HCT116 (cell line): ENCODE measurements at regions of chr17 and their contacts with region 1.

Region 1: GRCh38 chr17:65231662-65232335 is 94.6 kb downstream of the RGS9 start:
- DNase-seq: peak; percentile 74
- ATAC-seq: peak; percentile 92
- H3K4me3 ChIP-seq: no peak overlapping the region
- H3K27ac ChIP-seq: no peak overlapping the region
- H3K4me1 ChIP-seq: peaks cover 24 to 32% of the 10 kb centered on the region in 2 experiments
- H3K27me3 ChIP-seq: no peaks in the 10 kb centered on the region
- CTCF ChIP-seq: peak; percentile 88 to 97 (median 95)
- POLR2A ChIP-seq: no peak
- RAD21 ChIP-seq: peak; percentile 98

Region 2: DNA sequence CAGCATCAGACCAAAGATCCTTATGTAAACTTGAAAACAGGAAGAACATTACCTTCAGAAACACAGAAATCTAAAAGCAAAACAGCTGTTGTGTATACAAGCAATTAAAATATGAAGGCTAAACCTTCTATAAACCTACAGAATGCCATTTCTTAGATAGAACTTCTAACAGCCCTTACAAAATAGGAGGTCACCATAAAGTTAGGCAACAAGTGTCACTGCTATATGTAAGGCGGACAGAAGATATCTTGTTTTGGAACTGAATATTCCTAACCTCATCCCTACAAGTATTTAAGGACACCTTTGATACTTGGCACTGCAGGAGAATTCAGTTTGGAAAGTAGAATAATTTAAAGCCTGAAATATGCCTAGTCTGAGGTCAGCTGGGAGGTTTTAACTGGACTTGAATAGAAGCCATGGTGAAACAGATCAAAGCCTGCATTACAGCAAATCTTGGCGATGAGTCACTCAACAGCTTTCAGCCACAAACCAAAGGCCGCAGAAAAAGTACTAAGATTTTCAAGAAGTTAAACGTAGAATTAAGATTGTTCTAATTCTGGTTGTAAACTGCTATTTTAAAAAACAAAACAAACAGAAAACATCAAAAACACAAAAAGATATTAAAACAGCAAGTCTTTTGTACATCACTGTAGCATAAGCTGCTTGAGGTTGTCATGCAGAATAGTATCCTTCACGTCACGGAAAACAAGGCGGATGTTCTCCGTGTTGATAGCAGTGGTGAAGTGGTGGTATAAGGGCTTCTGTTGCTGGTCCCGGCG is 218.0 kb before region 1 on chr17:
- CTCF ChIA-PET with region 1: no interaction called
- POLR2A ChIA-PET with region 1: no interaction called
- RAD21 ChIA-PET with region 1: no interaction called
- intact Hi-C with region 1: no loop called
- DNase-seq: peak; percentile 37
- ATAC-seq: peak; percentile 65
- H3K4me3 ChIP-seq: no peak overlapping the region
- H3K27ac ChIP-seq: no peak overlapping the region
- H3K4me1 ChIP-seq: peaks cover 11 to 15% of the 10 kb centered on the region in 2 experiments
- H3K27me3 ChIP-seq: no peaks in the 10 kb centered on the region
- CTCF ChIP-seq: no peak
- POLR2A ChIP-seq: no peak
- RAD21 ChIP-seq: no peak

Region 3: GRCh38 chr17:65219124-65219523 is 12.7 kb before region 1 on chr17:
- CTCF ChIA-PET with region 1: interaction called, 16 read pairs
- POLR2A ChIA-PET with region 1: interaction called, 3 read pairs
- RAD21 ChIA-PET with region 1: no interaction called
- intact Hi-C with region 1: no loop called
- DNase-seq: no peak
- ATAC-seq: peak; percentile 63
- H3K4me3 ChIP-seq: no peak overlapping the region
- H3K27ac ChIP-seq: no peak overlapping the region
- H3K4me1 ChIP-seq: peaks cover 13 to 16% of the 10 kb centered on the region in 2 experiments
- H3K27me3 ChIP-seq: peaks cover 14% of the 10 kb centered on the region; the same call in 1 of the 2 replicates
- CTCF ChIP-seq: peak; percentile 15 to 60 (median 51); a peak in 4 of 6 replicates
- POLR2A ChIP-seq: no peak
- RAD21 ChIP-seq: peak; percentile 55

Region 4: DNA sequence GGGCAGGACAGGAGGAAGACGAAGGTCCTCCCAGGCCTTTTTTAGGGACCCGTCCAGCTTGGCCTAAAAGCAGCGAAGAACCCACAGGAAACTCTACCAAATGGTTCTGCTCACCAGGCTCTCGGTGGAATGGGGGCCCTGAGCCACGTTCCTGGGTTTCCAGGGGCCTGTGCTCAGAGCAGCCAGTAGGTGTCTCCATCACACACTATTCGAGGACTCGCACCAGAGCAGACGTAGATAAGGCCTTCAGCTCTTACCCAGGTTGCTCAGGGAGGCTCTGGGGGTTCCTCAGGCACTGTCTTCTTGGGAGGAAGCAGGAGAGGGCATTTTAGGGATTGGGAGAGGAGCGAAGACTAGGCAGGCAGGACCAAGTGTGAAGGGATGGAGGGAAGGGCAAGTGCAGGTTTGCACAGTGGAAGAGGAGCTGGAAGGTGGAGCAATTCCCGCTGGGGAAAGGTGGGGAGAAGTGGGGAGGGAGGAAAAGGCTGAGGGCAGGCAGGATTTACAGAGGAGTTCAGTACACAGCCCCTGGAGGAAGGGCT is 62.5 kb after region 1 on chr17:
- CTCF ChIA-PET with region 1: interaction called, 10 read pairs
- POLR2A ChIA-PET with region 1: no interaction called
- RAD21 ChIA-PET with region 1: interaction called in 1 of 2 experiments, 3 read pairs
- intact Hi-C with region 1: no loop called
- DNase-seq: peak; percentile 72
- ATAC-seq: peak; percentile 100
- H3K4me3 ChIP-seq: no peak overlapping the region
- H3K27ac ChIP-seq: no peak overlapping the region
- H3K4me1 ChIP-seq: peaks cover 4 to 16% of the 10 kb centered on the region in 2 experiments; a peak in 3 of 4 replicates
- H3K27me3 ChIP-seq: no peaks in the 10 kb centered on the region
- CTCF ChIP-seq: peak; percentile 88 to 97 (median 96)
- POLR2A ChIP-seq: no peak
- RAD21 ChIP-seq: peak; percentile 98

Region 5: GRCh38 chr17:65370669-65371131 is 138.9 kb after region 1 on chr17:
- CTCF ChIA-PET with region 1: no interaction called
- POLR2A ChIA-PET with region 1: no interaction called
- RAD21 ChIA-PET with region 1: no interaction called
- intact Hi-C with region 1: no loop called
- DNase-seq: no peak
- ATAC-seq: no peak
- H3K4me3 ChIP-seq: no peak overlapping the region
- H3K27ac ChIP-seq: no peak overlapping the region
- H3K4me1 ChIP-seq: no peaks in the 10 kb centered on the region
- H3K27me3 ChIP-seq: no peaks in the 10 kb centered on the region
- CTCF ChIP-seq: no peak
- POLR2A ChIP-seq: no peak
- RAD21 ChIP-seq: no peak

Region 6: GRCh38 chr17:65794572-65794971 is 562.8 kb after region 1 on chr17:
- CTCF ChIA-PET with region 1: interaction called, 4 read pairs
- POLR2A ChIA-PET with region 1: no interaction called
- RAD21 ChIA-PET with region 1: no interaction called
- intact Hi-C with region 1: loop called (anchors 5 kb)
- DNase-seq: peak; percentile 48
- ATAC-seq: peak; percentile 84
- H3K4me3 ChIP-seq: no peak overlapping the region
- H3K27ac ChIP-seq: no peak overlapping the region
- H3K4me1 ChIP-seq: 0 out of 4 replicates have a peak, but pooled peaks cover 0 to 3% of the 10 kb centered on the region in 2 experiments
- H3K27me3 ChIP-seq: no peaks in the 10 kb centered on the region
- CTCF ChIP-seq: peak; percentile 54 to 82 (median 75); a peak in 5 of 6 replicates
- POLR2A ChIP-seq: no peak
- RAD21 ChIP-seq: peak; percentile 74